ENCODE measurements at regions of chr9 and their contacts with region 1.

Region 1: GRCh38 chr9:114189823-114190562 is 34.7 kb downstream of the COL27A1 start:
- DNase-seq: no peak
- H3K4me3 ChIP-seq: no peak overlapping the region
- CTCF ChIP-seq: no peak

Region 2: GRCh38 chr9:113901221-113901688 is 288.7 kb before region 1 on chr9:
- in situ Hi-C with region 1: no loop called
- DNase-seq: no peak
- H3K4me3 ChIP-seq: no peak overlapping the region
- CTCF ChIP-seq: no peak

Region 3: DNA sequence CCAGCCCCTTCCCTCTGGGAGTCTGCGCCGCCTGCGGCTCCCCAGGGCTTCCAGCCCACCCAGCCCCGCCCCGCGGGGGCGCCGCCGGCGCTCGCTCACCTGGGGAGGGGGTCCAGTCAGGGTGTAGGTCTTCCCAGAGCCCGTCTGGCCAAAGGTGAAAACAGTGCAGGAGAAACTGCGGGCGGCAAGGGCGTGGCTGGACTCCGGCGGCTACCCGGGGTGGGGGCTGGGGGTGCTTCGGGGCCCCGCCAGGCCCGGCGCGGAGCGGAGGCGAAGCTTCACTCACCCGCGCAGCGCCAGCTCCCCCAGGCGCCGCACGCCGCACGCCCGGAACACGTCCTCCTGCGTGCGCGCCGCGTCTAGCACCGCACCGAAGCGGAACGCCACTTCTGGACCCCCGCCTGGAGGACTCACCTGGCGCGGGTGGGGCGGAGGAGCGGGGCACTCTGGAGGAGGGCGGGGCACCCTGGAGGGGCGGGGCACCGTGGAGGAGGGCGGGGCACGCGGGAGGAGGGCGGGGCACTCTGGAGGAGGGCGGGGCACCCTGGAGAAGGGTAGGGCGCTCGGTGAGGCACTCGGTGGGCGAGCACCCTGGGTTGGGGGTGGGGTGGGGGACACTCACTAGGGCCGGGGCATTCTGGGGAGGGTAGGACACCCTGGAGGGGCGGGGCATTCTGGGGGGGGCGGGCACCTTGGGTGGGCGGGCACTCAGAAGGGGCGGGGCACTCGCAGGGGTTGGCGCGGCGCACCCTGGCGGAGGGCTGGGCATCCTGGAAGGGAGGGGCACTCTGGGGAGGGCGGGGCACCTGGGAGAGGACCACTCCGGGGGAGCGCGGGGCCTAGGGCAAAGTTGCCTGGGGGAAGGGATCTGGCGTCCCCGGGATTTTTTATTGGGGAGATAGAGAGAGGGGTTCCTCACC is 91.7 kb before region 1 on chr9:
- in situ Hi-C with region 1: loop called (anchors 5 kb)
- DNase-seq: no peak
- H3K4me3 ChIP-seq: peak overlapping the region; percentile 38
- CTCF ChIP-seq: no peak

Region 4: GRCh38 chr9:114123031-114123977 is 66.7 kb before region 1 on chr9:
- in situ Hi-C with region 1: no loop called
- DNase-seq: no peak
- H3K4me3 ChIP-seq: no peak overlapping the region
- CTCF ChIP-seq: no peak

Region 5: GRCh38 chr9:114263853-114264510 is 74.0 kb after region 1 on chr9:
- in situ Hi-C with region 1: loop called (anchors 5 kb)
- DNase-seq: no peak
- H3K4me3 ChIP-seq: no peak overlapping the region
- CTCF ChIP-seq: peak; percentile 2